Aorta (tissue), 5 donors: ENCODE measurements at regions of chr1 and their contacts with region 1.

Region 1: GRCh38 chr1:64242895-64243756 is 39.7 kb downstream of the UBE2U start:
- DNase-seq: no peak
- ATAC-seq: no peak
- H3K4me3 ChIP-seq: no peak overlapping the region
- H3K27ac ChIP-seq: no peak overlapping the region
- H3K4me1 ChIP-seq: no peaks in the 10 kb centered on the region
- H3K27me3 ChIP-seq: no peaks in the 10 kb centered on the region

Region 2: GRCh38 chr1:63575340-63575826 is 667.7 kb before region 1 on chr1:
- intact Hi-C with region 1: loop called (anchors 5 kb)
- DNase-seq: no peak
- ATAC-seq: no peak
- H3K4me3 ChIP-seq: no peak overlapping the region
- H3K27ac ChIP-seq: no peak overlapping the region
- H3K4me1 ChIP-seq: no peaks in the 10 kb centered on the region
- H3K27me3 ChIP-seq: no peaks in the 10 kb centered on the region

Region 3: DNA sequence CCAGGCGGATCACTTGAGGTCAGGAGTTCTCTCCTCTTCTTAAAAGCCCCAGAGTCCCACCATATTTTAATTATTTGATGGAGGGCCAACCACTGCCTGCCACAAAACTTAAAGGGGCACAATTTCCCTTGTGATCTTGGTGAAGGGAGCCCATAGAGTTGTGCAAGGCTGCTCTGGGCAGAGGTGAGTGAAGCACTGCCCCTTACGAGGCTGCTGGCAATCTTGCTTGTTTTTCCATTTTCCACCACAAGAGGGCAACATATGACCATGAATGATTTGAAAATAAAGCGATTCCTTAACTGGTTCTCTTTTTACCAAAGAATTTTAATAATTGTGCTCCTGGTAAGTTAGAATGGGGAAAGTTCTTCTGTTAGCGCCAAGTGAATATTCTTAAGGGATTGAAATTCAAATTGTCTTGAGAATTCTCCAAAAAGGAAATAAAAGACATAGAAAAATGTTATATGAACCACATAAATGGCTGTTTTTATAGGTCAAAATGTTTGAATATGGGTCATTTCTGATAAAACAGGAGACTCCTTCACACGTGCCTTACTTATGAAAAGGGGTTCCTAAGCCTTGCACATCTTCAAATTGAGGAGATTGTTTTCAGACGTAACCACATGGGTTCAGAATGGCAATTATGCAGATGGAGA is 627.2 kb before region 1 on chr1:
- intact Hi-C with region 1: loop called (anchors 2 to 5 kb)
- DNase-seq: peak in 1 of 2 donors; percentile 47
- ATAC-seq: peak; percentile 87
- H3K4me3 ChIP-seq: no peak overlapping the region
- H3K27ac ChIP-seq: no peak overlapping the region
- H3K4me1 ChIP-seq: peaks cover 6 to 7% of the 10 kb centered on the region in 2 donors
- H3K27me3 ChIP-seq: no peaks in the 10 kb centered on the region

Region 4: DNA sequence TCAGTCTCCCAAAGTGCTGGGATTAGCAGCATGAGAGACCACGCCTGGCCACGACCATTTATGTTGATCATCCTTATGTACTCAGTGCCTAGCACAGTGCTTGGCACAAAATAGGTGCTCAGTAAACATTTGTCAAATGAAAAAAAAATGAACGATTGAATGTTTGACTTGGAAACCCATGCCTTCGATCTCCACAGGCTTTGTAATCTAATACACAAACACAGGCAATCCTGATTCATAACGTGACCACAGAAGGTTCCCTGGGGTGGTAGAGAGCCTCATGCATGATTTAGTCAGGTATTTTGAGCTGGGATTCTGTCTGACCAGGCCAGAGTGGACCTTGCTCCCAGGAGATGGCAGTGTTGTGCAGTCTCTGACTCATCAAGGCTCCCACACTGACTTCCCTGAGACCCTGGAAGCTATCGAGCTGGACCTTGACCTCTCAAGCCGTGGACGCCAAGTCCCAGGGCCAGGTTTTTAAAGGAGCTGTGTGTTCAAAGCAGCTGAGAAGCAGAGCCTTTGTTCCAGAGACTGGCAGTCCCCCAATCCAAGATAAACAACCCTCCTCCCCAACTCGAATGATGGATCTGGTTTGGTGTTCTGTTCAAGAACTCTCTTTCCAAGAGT is 568.8 kb before region 1 on chr1:
- intact Hi-C with region 1: loop called (anchors 5 kb)
- DNase-seq: peak; percentile 84 to 87
- ATAC-seq: peak; percentile 85
- H3K4me3 ChIP-seq: no peak overlapping the region
- H3K27ac ChIP-seq: peak overlapping the region in 1 of 2 donors; percentile 13
- H3K4me1 ChIP-seq: no peaks in the 10 kb centered on the region
- H3K27me3 ChIP-seq: no peaks in the 10 kb centered on the region